ENCODE measurements at regions of chr1 and their contacts with region 1.

Region 1: DNA sequence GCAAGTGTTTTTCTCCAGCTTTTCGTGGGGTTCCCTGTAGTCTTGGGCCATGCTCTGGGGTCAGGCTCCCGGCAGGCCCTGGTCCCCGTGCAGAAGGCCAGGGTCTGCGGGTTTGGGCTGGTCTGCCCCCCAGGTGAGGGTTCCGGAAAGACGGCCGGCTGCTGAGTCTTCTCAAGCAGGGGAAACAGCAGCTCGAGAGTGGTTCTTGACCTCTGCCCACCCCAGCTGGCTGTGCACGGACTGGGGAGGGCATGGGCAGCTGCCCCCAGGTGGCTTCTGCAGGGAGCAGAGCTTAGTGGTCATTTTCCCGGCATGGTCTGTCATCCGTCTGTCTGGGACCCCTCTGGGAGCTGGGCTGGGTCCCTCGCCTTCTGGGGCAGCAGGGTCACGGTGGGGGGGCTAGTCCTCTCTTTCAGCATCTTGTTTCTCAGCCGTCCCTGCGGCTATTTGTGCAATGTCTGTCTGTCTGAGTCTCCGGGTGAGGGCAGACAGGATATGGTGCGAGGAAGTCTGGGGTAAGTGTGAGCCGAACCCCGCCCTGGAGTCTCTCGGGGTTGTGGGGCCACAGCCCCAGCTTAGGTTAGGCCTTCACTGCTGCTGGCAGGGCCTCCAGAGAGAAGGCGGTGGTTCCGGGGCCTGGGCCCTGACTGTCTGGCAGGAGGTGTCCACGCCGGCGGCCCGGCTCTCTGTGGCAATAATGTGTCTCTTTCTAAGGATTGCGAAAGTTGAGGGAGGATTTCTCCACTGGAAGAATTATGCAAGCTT is 6.1 kb downstream of the SKI start:
- DNase-seq: peak; percentile 86
- H3K4me3 Mint-ChIP-seq: peak overlapping the region; percentile 98
- H3K27ac Mint-ChIP-seq: peak overlapping the region; percentile 90
- H3K4me1 Mint-ChIP-seq: peaks cover 67% of the 10 kb centered on the region
- H3K27me3 Mint-ChIP-seq: no peaks in the 10 kb centered on the region

Region 2: GRCh38 chr1:2148691-2149090 is 85.5 kb before region 1 on chr1:
- CTCF ChIA-PET with region 1: no interaction called
- POLR2A ChIA-PET with region 1: no interaction called
- DNase-seq: peak; percentile 84
- H3K4me3 Mint-ChIP-seq: no peak overlapping the region
- H3K27ac Mint-ChIP-seq: no peak overlapping the region
- H3K4me1 Mint-ChIP-seq: peaks cover 13% of the 10 kb centered on the region
- H3K27me3 Mint-ChIP-seq: no peaks in the 10 kb centered on the region

Region 3: GRCh38 chr1:2163205-2163604 is 71.0 kb before region 1 on chr1:
- CTCF ChIA-PET with region 1: no interaction called
- POLR2A ChIA-PET with region 1: no interaction called
- DNase-seq: no peak
- H3K4me3 Mint-ChIP-seq: no peak overlapping the region
- H3K27ac Mint-ChIP-seq: no peak overlapping the region
- H3K4me1 Mint-ChIP-seq: no peaks in the 10 kb centered on the region
- H3K27me3 Mint-ChIP-seq: no peaks in the 10 kb centered on the region

Region 4: DNA sequence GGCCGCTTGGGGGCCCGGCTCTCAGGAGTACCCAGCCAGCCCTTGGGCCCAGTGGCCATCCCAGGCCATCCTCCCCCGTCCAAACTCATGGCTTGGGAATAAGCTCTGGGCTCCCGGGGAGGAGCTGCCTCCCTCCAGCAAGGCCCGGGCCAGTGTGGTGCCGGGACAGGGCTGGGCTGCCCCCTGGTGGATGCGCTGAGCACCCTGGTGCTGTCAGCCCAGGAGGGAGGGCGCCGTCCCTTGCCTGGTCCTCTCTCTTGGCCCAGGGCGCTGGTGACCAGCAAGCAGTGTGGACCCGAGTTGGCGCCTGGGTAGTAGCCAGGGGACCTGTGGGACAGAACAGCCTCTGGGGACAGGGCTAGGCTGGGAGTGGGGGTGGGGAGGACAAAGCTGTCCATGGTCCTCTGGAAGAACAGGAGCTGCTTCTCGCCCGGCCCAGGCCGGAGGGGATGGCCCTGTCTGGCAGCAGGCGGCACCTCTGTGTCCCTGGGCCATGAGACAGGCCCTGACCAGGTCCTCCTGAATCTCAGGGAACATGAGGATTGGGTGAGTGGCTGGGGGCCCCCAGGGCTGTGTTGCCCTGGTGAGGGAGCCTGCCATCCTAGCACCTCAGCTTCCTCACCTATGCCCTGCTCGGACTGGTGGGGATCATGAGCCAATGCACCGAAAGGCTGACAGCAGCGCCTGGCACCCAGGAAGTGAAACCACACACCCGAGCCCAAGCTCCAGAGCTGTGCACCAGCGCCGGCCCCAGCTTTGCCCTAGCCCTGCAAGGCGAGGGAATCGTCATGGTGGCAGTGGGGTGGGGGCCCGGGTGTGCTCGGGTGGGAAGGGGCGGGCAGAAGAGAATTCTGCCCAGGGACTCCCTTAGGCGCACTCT is 147.8 kb after region 1 on chr1:
- CTCF ChIA-PET with region 1: interaction called, 22 read pairs
- POLR2A ChIA-PET with region 1: interaction called, 8 read pairs
- DNase-seq: peak; percentile 81
- H3K4me3 Mint-ChIP-seq: no peak overlapping the region
- H3K27ac Mint-ChIP-seq: no peak overlapping the region
- H3K4me1 Mint-ChIP-seq: peaks cover 8% of the 10 kb centered on the region
- H3K27me3 Mint-ChIP-seq: no peaks in the 10 kb centered on the region

Measured in activated CD4-positive, alpha-beta memory T cell treated with anti-CD3 and anti-CD28 coated beads, Interleukin-2, amount 10 ng/mL, durations not matched to agents 7 days and 5 days (primary cell).